Activated CD4-positive, alpha-beta T cell treated with anti-CD3 and anti-CD28 coated beads, Interleukin-2, amount 10 ng/mL, durations not matched to agents 7 days and 5 days (primary cell): ENCODE measurements at regions of chr1 and their contacts with region 1.

Region 1: DNA sequence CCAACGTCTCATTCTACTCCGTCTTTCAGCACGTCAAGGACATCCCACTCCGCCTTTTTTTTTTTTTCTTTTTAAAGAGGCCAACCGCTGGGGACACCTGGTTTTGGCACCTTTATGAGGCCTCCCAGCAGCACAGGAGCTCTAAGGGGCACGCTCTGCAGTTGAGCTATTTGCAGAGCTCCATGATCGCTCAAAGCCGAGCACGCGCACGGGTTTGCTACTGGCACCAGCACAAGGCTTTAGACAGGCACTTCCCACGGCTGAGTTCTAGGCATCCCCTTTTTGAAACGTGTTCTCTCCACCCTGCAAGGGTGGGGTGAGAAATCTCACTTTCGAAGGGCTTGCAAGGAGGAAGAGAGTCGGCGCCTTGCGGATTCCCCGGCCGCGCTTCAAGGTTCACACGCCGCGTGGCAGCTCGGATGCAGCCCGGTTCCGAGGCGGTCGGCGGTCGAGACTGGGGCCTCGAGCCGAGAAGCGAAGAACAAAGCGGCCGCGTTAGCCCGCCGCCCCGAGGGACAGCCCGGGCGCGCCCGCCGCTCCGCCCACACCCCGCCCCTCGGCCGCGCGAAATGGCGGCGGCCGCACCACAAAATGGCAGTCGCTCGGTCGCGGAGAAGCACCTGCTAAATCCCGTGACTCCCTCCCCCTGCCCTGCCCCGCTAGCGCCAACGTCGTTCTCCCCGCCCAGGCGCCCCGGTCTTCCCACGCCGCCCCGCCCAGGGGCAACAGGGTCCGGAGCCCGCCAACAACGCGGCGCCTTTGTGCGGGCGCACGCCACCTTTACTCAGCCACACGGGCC is 12.9 kb upstream of the SPEN start:
- DNase-seq: peak; percentile 91
- H3K4me3 Mint-ChIP-seq: peak overlapping the region; percentile 90
- H3K27ac Mint-ChIP-seq: peak overlapping the region; percentile 98
- H3K4me1 Mint-ChIP-seq: peaks cover 41% of the 10 kb centered on the region
- H3K27me3 Mint-ChIP-seq: no peaks in the 10 kb centered on the region

Region 2: GRCh38 chr1:15848957-15849774 is 14.6 kb after region 1 on chr1:
- CTCF ChIA-PET with region 1: interaction called, 10 read pairs
- POLR2A ChIA-PET with region 1: interaction called, 5 read pairs
- DNase-seq: peak; percentile 66
- H3K4me3 Mint-ChIP-seq: peak overlapping the region; percentile 96
- H3K27ac Mint-ChIP-seq: peak overlapping the region; percentile 94
- H3K4me1 Mint-ChIP-seq: peaks cover 49% of the 10 kb centered on the region
- H3K27me3 Mint-ChIP-seq: no peaks in the 10 kb centered on the region